ENCODE measurements at regions of chr10 and their contacts with region 1.

Region 1: DNA sequence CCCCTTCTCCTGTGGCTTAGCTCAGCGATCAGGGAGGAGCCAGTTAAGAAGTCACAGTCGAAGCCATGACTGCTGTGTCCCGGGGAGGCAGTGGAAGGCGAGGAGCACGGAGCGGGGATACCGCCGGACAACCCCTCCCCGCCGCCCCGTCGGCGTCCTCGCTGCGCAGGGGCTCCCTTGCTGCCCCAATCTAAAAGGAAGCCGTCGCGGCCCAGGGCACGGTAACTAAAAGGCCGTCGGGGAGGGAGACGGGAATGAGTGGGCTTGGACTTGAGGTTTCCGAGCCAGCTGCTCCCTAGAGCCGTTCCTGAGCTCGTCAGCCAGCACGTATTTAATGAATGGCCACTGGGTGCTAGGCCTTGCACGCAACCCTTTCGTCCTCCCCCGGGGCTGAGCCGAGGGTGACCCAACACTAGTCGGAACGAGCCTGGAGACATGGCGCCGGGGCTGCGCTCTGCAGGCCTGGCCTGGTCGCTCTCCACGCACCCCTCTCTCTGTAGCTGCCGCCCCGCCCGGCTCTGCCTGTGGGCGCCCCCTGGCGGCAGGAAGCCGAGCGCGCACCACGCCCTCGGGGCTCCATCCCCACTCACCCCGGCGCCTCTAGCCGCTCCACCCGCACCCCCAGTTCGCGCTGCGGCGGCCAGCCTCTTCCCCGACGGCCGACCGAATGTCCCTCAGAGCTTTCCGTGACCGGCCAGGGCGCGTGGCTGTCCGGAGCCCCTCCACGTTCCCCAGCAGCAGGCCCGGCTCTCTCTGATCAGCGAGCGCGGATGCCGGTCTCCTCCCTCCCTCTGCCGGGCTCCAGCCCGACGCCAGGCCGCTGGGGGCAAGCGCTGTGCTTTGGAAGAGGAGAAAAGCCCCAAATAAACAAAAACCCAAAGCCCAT is 29.3 kb upstream of the KCNK18 start:
- DNase-seq: no peak
- ATAC-seq: peak; percentile 91
- H3K4me3 ChIP-seq: peak overlapping the region in 1 of 2 experiments; percentile 34; a peak in 2 of 4 replicates
- H3K27ac ChIP-seq: no peak overlapping the region
- H3K4me1 ChIP-seq: peaks cover 2 to 24% of the 10 kb centered on the region in 2 experiments; a peak in 3 of 4 replicates
- H3K27me3 ChIP-seq: peaks cover 13% of the 10 kb centered on the region; the same call in 1 of the 2 replicates
- CTCF ChIP-seq: peak; percentile 78 to 97 (median 96)
- POLR2A ChIP-seq: peak; percentile 22
- RAD21 ChIP-seq: peak; percentile 75

Region 2: DNA sequence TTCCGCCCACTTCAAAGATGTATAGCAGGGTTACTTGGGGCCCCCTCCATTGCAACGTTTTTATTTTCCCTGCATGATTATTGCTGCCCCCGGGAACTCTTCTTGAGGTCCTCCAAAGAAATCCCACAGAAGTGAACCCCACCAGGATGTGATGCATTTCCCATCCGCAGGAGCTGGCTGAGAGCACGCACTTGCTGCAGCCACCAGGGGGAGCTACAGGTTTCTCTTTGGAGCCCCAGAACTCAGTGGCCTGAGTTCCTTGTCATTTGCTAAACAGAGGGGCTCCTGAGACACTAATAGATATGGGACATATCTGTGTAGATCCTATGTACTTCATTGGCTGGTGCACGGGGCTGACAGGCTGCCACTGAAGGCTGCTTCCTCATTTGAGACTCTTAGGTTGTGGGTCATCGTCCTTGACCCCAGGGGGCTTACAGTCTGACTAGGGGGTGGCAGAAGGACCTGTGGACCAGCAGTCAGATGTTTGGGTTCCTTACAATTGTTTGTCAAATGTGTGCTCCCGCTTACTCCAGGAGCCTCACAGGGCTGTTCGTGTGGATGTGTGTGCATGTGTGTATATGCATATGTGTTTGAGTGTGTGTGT is 371.0 kb before region 1 on chr10:
- CTCF ChIA-PET with region 1: interaction called, 629 read pairs
- POLR2A ChIA-PET with region 1: interaction called, 4 read pairs
- RAD21 ChIA-PET with region 1: interaction called, 10 to 30 read pairs
- intact Hi-C with region 1: loop called (anchors 1 kb)
- DNase-seq: peak; percentile 65
- ATAC-seq: peak; percentile 98
- H3K4me3 ChIP-seq: no peak overlapping the region
- H3K27ac ChIP-seq: no peak overlapping the region
- H3K4me1 ChIP-seq: no peaks in the 10 kb centered on the region
- H3K27me3 ChIP-seq: no peaks in the 10 kb centered on the region
- CTCF ChIP-seq: peak; percentile 98 to 100 (median 100)
- POLR2A ChIP-seq: no peak
- RAD21 ChIP-seq: peak; percentile 100

Region 3: GRCh38 chr10:117005027-117005526 is 163.0 kb before region 1 on chr10 and contains the start of gene SHTN1:
- CTCF ChIA-PET with region 1: interaction called, 6 read pairs
- POLR2A ChIA-PET with region 1: no interaction called
- RAD21 ChIA-PET with region 1: no interaction called
- intact Hi-C with region 1: loop called (anchors 5 kb)
- DNase-seq: peak; percentile 84
- ATAC-seq: peak; percentile 89
- H3K4me3 ChIP-seq: peak within 1 kb of the TSS; percentile 85 to 89
- H3K27ac ChIP-seq: peak within 1 kb of the TSS; percentile 92
- H3K4me1 ChIP-seq: peaks cover 25 to 36% of the 10 kb centered on the region in 2 experiments
- H3K27me3 ChIP-seq: no peaks in the 10 kb centered on the region
- CTCF ChIP-seq: no peak
- POLR2A ChIP-seq: peak; percentile 56
- RAD21 ChIP-seq: no peak
- total RNA-seq, gene SHTN1: 64.0 TPM

Region 4: DNA sequence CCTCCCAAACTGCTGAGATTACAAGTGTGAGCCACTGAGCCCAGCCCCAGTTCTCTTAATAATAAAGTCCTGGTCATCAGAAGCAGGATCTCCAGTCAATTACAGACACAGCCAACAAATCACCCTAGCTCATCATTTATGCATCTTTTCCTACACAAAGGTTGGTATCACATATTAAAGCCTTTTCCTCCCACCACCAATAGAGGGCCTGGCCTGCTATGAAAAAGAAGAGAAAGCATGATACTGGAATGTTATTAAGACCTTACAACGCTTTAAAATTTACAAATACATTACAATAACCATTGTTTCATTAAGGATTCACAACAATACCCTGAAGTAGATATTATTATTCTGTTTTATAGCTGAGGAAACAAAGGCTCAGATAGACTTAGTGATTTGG is 55.8 kb before region 1 on chr10:
- CTCF ChIA-PET with region 1: interaction called, 10 read pairs
- POLR2A ChIA-PET with region 1: no interaction called
- RAD21 ChIA-PET with region 1: no interaction called
- intact Hi-C with region 1: loop called (anchors 5 kb)
- DNase-seq: peak; percentile 15
- ATAC-seq: peak; percentile 93
- H3K4me3 ChIP-seq: no peak overlapping the region
- H3K27ac ChIP-seq: no peak overlapping the region
- H3K4me1 ChIP-seq: no peaks in the 10 kb centered on the region
- H3K27me3 ChIP-seq: no peaks in the 10 kb centered on the region
- CTCF ChIP-seq: peak; percentile 50 to 84 (median 80); a peak in 5 of 6 replicates
- POLR2A ChIP-seq: no peak
- RAD21 ChIP-seq: peak; percentile 56

Region 5: DNA sequence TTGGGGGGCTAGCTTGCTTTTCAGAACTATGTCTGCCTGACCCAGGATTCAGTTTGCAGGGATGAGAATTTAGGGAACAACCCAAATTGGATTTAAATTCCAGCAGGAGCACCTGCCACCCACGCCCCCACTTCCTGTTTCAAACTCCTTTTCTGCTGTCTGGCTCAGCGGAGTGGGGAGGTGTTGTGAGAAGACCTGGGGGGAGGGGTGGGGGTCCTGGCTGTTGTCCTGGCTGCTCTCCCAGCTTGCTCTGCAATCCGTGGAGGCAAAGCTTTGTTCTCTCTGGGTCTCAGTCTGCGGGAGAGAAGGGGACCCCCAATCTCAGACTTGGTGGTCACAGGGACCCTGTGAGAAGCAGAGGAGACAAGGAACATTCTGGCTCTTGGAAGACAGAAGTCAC is 30.1 kb after region 1 on chr10:
- CTCF ChIA-PET with region 1: no interaction called
- POLR2A ChIA-PET with region 1: no interaction called
- RAD21 ChIA-PET with region 1: no interaction called
- intact Hi-C with region 1: no loop called
- DNase-seq: no peak
- ATAC-seq: no peak
- H3K4me3 ChIP-seq: no peak overlapping the region
- H3K27ac ChIP-seq: no peak overlapping the region
- H3K4me1 ChIP-seq: no peaks in the 10 kb centered on the region
- H3K27me3 ChIP-seq: no peaks in the 10 kb centered on the region
- CTCF ChIP-seq: no peak
- POLR2A ChIP-seq: no peak
- RAD21 ChIP-seq: no peak